H1 (cell line): ENCODE measurements at regions of chr10 and their contacts with region 1.

Region 1: GRCh38 chr10:102503281-102504220 is at the start of gene SUFU:
- DNase-seq: peak; percentile 98 to 99
- H3K4me3 ChIP-seq: peak within 1 kb of the TSS; percentile 90 to 100 (median 98)
- H3K27ac ChIP-seq: no peak within 1 kb of the TSS
- H3K4me1 ChIP-seq: peaks cover 0 to 10% (median 3%) of the 10 kb centered on the region in 4 experiments; a peak in 4 of 7 replicates
- H3K27me3 ChIP-seq: peaks cover 2 to 11% (median 8%) of the 10 kb centered on the region in 4 experiments; a peak in 4 of 7 replicates
- CTCF ChIP-seq: peak; percentile 78 to 93 (median 80)
- EP300 ChIP-seq: no peak
- POLR2A ChIP-seq: peak in 1 of 2 experiments; percentile 58; a peak in 2 of 3 replicates
- RAD21 ChIP-seq: peak; percentile 74 to 80
- total RNA-seq, gene SUFU: 9.4 and 10.8 TPM in 2 replicates

Region 2: GRCh38 chr10:102467971-102468438 is 35.5 kb before region 1 on chr10:
- CTCF ChIA-PET with region 1: no interaction called
- POLR2A ChIA-PET with region 1: no interaction called
- DNase-seq: no peak
- H3K4me3 ChIP-seq: no peak overlapping the region
- H3K27ac ChIP-seq: no peak overlapping the region
- H3K4me1 ChIP-seq: peaks cover 0 to 7% (median 2%) of the 10 kb centered on the region in 4 experiments; a peak in 2 of 7 replicates
- H3K27me3 ChIP-seq: no peaks in the 10 kb centered on the region
- CTCF ChIP-seq: no peak
- EP300 ChIP-seq: no peak
- POLR2A ChIP-seq: no peak
- RAD21 ChIP-seq: no peak

Region 3: GRCh38 chr10:102565793-102566192 is 62.2 kb after region 1 on chr10:
- CTCF ChIA-PET with region 1: interaction called, 25 read pairs
- POLR2A ChIA-PET with region 1: interaction called, 3 read pairs
- DNase-seq: peak; percentile 77 to 78
- H3K4me3 ChIP-seq: no peak overlapping the region
- H3K27ac ChIP-seq: no peak overlapping the region
- H3K4me1 ChIP-seq: 0 out of 7 replicates have a peak, but pooled peaks cover 0 to 3% (median 0%) of the 10 kb centered on the region in 4 experiments
- H3K27me3 ChIP-seq: peaks cover 10 to 49% (median 37%) of the 10 kb centered on the region in 4 experiments
- CTCF ChIP-seq: peak; percentile 56 to 88 (median 63)
- EP300 ChIP-seq: 0 out of 3 replicates have a peak, but pooled peaks of 1 of the 2 experiments have one; percentile 50
- POLR2A ChIP-seq: no peak
- RAD21 ChIP-seq: peak; percentile 58 to 69

Region 4: DNA sequence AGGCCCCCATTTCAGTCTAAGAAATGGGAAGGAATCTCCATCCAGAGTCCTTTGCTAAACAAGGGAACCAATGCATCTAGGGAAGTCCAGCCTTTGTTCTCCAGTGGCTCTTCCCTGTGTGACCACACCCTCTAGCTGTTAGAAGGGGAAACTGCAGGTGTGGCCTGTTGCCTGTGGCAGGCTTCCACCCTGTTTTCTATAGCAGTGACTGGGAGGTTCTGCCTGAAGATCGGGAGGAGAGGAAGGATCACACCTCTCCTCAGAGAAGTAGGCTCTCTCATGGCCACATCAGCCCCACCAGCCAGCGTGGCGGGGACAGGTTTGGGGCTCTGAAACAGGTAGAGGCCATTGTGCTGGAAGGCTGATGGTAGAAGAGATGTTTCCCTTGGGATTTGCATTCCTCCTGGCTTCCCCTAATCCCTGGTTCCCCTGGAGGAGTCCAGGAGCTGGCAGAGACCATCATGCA is 93.0 kb after region 1 on chr10:
- CTCF ChIA-PET with region 1: interaction called, 13 read pairs
- POLR2A ChIA-PET with region 1: no interaction called
- DNase-seq: peak in 1 of 2 experiments; percentile 65
- H3K4me3 ChIP-seq: no peak overlapping the region
- H3K27ac ChIP-seq: no peak overlapping the region
- H3K4me1 ChIP-seq: peaks cover 0 to 2% (median 0%) of the 10 kb centered on the region in 4 experiments; a peak in 3 of 7 replicates
- H3K27me3 ChIP-seq: no peaks in the 10 kb centered on the region; a peak in 1 of 7 replicates
- CTCF ChIP-seq: peak; percentile 81 to 97 (median 87)
- EP300 ChIP-seq: no peak
- POLR2A ChIP-seq: no peak
- RAD21 ChIP-seq: peak; percentile 77 to 85